GM12878 (cell line): ENCODE measurements at regions of chr7 and their contacts with region 1.

Region 1: GRCh38 chr7:102044984-102045673 is 227.7 kb downstream of the CUX1 start:
- DNase-seq: no peak
- ATAC-seq: no peak
- H3K4me3 ChIP-seq: no peak overlapping the region
- H3K27ac ChIP-seq: no peak overlapping the region
- H3K4me1 ChIP-seq: peaks cover 54% of the 10 kb centered on the region
- H3K27me3 ChIP-seq: no peaks in the 10 kb centered on the region
- CTCF ChIP-seq: no peak
- EP300 ChIP-seq: no peak
- POLR2A ChIP-seq: no peak
- RAD21 ChIP-seq: no peak

Region 2: DNA sequence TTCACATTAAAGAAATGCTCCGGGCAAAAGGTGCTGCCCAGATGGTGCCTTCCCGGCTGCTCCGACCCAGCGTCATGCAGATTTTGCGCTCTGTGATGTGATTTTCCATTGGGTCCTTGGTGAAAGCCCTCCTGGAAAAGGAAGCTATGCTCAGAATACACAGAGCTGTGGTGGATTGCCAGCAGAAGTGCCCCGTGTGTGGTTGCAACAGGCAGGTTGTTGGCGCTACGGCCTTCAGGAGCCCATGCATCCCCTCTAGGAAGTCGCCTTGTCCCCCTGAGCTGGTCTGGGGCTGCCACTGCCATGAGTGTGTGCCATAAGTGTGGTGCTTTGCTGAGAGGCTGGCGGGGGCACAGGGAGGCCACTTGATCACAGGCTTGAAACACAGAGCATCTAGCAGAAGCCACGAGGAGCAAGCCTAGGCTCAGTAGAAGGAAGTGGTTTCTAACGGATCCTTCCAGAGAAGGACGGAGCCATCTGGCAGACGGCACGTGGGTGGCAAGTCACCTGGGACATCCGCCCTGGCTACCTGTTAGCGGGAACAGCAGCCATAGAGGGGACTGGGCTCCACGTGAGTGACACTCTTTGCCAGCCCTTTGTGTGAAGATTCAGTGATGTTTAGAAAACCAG is 16.8 kb before region 1 on chr7:
- CTCF ChIA-PET with region 1: interaction called, 3 read pairs
- POLR2A ChIA-PET with region 1: no interaction called
- RAD21 ChIA-PET with region 1: no interaction called
- SMC1A ChIA-PET with region 1: interaction called, 23 read pairs
- in situ Hi-C with region 1: no loop called
- intact Hi-C with region 1: no loop called
- DNase-seq: no peak
- ATAC-seq: no peak
- H3K4me3 ChIP-seq: no peak overlapping the region
- H3K27ac ChIP-seq: no peak overlapping the region; the same call in 1 of the 2 replicates
- H3K4me1 ChIP-seq: peaks cover 26% of the 10 kb centered on the region
- H3K27me3 ChIP-seq: no peaks in the 10 kb centered on the region
- CTCF ChIP-seq: no peak
- EP300 ChIP-seq: no peak
- POLR2A ChIP-seq: no peak
- RAD21 ChIP-seq: no peak

Region 3: GRCh38 chr7:102055181-102055976 is 10.2 kb after region 1 on chr7:
- CTCF ChIA-PET with region 1: interaction called, 3 read pairs
- POLR2A ChIA-PET with region 1: interaction called, 7 read pairs
- RAD21 ChIA-PET with region 1: interaction called, 9 read pairs
- SMC1A ChIA-PET with region 1: interaction called, 10 read pairs
- in situ Hi-C with region 1: no loop called
- intact Hi-C with region 1: no loop called
- DNase-seq: no peak
- ATAC-seq: peak; percentile 89
- H3K4me3 ChIP-seq: no peak overlapping the region
- H3K27ac ChIP-seq: no peak overlapping the region
- H3K4me1 ChIP-seq: peaks cover 15% of the 10 kb centered on the region
- H3K27me3 ChIP-seq: no peaks in the 10 kb centered on the region
- CTCF ChIP-seq: no peak
- EP300 ChIP-seq: peak in 1 of 2 experiments; percentile 32; a peak in 1 of 4 replicates
- POLR2A ChIP-seq: no peak
- RAD21 ChIP-seq: no peak

Region 4: GRCh38 chr7:102069913-102070629 is 24.9 kb after region 1 on chr7:
- CTCF ChIA-PET with region 1: no interaction called
- POLR2A ChIA-PET with region 1: no interaction called
- RAD21 ChIA-PET with region 1: no interaction called
- SMC1A ChIA-PET with region 1: no interaction called
- in situ Hi-C with region 1: no loop called
- intact Hi-C with region 1: no loop called
- DNase-seq: no peak
- ATAC-seq: no peak
- H3K4me3 ChIP-seq: no peak overlapping the region
- H3K27ac ChIP-seq: no peak overlapping the region
- H3K4me1 ChIP-seq: peaks cover 4% of the 10 kb centered on the region
- H3K27me3 ChIP-seq: no peaks in the 10 kb centered on the region
- CTCF ChIP-seq: no peak
- EP300 ChIP-seq: no peak
- POLR2A ChIP-seq: no peak
- RAD21 ChIP-seq: no peak

Region 5: DNA sequence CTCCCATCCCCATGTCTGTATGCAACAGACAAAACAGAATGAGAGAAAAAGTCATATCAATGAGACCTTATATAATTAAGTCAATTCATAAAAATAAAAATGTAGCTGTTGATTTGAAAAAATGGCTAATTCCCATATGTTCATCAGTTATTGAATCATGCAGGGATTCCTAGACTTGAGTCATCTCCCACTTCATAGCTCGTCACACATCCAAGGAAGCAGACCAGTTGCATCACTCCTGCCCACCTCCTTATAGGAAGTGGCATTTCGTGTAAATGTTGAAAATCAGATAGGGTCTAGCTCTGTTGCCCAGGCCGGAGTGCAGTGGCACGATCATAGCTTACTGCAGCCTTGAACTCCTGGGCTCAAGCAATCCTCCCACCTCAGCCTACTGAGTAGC is 185.5 kb after region 1 on chr7:
- CTCF ChIA-PET with region 1: no interaction called
- POLR2A ChIA-PET with region 1: no interaction called
- RAD21 ChIA-PET with region 1: no interaction called
- SMC1A ChIA-PET with region 1: no interaction called
- in situ Hi-C with region 1: no loop called
- intact Hi-C with region 1: no loop called
- DNase-seq: no peak
- ATAC-seq: no peak
- H3K4me3 ChIP-seq: no peak overlapping the region
- H3K27ac ChIP-seq: no peak overlapping the region
- H3K4me1 ChIP-seq: no peaks in the 10 kb centered on the region
- H3K27me3 ChIP-seq: no peaks in the 10 kb centered on the region
- CTCF ChIP-seq: no peak
- EP300 ChIP-seq: no peak
- POLR2A ChIP-seq: no peak
- RAD21 ChIP-seq: no peak